CD4-positive, alpha-beta T cell (primary cell): ENCODE measurements at regions of chr5 and their contacts with region 1.

Region 1: DNA sequence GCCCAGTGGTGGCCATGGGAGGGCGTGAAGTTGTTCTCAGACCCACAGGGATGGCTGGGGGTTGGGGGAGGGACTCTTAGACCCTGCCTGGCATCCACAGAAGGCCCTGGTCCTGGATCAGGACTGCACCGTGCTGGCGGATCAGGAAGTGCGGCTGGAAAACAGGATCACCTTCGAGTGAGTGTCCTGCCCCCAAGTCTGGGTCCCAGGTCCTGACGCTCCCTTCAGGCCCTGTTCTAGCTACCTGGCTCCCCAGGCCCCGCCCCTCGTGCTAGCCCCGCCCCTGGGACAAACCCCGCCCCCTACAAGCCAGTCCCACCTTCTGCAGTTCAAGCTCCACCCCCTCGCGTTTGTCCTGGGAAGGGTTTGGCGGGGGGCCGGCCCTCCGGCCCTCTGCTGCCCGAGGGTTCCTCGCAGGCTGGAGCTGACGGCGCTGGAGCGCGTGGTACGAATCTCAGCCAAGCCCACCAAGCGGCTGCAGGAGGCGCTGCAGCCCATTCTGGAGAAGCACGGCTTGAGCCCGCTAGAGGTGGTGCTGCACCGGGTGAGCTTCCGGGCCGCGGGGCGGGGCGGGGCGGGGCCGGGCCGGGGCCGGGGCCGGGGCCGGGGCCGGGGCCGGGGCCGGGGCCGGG is 12.9 kb downstream of the RGS14 start:
- DNase-seq: peak in 12 of 14 experiments; percentile 29 to 90 (median 62)
- ATAC-seq: peak; percentile 74
- H3K4me3 ChIP-seq: peak overlapping the region; percentile 48
- H3K4me3 Mint-ChIP-seq: peak overlapping the region; percentile 42
- H3K27ac ChIP-seq: peak overlapping the region; percentile 23 to 27
- H3K27ac Mint-ChIP-seq: peak overlapping the region; percentile 33
- H3K4me1 ChIP-seq: peaks cover 82% of the 10 kb centered on the region
- H3K4me1 Mint-ChIP-seq: peaks cover 67% of the 10 kb centered on the region
- H3K27me3 ChIP-seq: no peaks in the 10 kb centered on the region
- H3K27me3 Mint-ChIP-seq: no peaks in the 10 kb centered on the region
- CTCF ChIP-seq: no peak

Region 2: DNA sequence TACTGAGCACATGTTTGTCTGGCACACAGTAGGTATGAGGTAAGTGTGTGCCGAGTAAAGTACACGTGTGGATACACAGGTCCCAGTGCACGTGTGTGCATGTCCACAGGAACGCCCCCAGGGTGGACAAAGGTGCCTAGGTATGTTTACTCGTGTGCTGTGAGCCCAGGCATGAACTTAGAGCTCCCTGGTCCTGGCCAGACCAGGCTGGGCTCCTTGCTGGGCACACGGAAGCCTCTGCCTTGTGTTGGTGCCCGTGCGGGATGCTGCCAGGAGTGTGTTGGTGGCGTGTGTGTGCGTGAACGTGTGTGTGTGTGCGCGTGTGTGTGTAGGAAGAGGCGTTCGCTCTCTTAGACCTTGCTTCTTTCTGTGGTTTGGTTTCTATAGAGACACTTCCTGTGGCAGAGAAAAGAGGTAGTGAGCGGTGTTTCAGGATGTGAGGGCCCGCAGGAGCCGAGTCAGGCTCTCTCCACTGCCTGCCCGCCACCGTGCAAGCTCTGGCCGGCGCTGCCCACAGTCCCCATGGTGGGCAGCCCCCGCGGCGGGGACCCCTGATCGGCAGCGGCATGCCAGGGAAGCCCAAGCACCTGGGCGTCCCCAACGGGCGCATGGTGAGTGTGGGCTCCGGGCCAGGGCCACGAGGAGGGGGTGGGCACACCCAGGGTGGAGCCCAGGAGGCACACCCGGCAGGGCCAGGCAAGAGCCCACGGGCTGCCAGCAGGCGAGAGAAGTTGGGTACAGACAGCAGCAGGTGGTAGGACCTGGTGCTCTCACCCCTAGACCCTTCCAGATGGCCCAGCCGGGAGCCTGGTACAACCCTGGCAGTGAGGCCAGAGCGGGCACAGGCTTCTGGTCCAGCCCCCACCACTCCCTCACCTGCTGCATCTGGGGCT is 12.9 kb before region 1 on chr5 and contains the start of gene RGS14:
- CTCF ChIA-PET with region 1: interaction called, 31 read pairs
- POLR2A ChIA-PET with region 1: interaction called, 51 read pairs
- intact Hi-C with region 1: no loop called
- DNase-seq: peak; percentile 55 to 93 (median 70)
- ATAC-seq: peak; percentile 91
- H3K4me3 ChIP-seq: peak within 1 kb of the TSS; percentile 99
- H3K4me3 Mint-ChIP-seq: peak within 1 kb of the TSS; percentile 82
- H3K27ac ChIP-seq: peak within 1 kb of the TSS; percentile 78 to 80
- H3K27ac Mint-ChIP-seq: peak within 1 kb of the TSS; percentile 83
- H3K4me1 ChIP-seq: peaks cover 79% of the 10 kb centered on the region
- H3K4me1 Mint-ChIP-seq: peaks cover 81% of the 10 kb centered on the region
- H3K27me3 ChIP-seq: no peaks in the 10 kb centered on the region
- H3K27me3 Mint-ChIP-seq: no peaks in the 10 kb centered on the region
- CTCF ChIP-seq: no peak
- total RNA-seq, gene RGS14: 34.7 to 35.3 TPM

Region 3: DNA sequence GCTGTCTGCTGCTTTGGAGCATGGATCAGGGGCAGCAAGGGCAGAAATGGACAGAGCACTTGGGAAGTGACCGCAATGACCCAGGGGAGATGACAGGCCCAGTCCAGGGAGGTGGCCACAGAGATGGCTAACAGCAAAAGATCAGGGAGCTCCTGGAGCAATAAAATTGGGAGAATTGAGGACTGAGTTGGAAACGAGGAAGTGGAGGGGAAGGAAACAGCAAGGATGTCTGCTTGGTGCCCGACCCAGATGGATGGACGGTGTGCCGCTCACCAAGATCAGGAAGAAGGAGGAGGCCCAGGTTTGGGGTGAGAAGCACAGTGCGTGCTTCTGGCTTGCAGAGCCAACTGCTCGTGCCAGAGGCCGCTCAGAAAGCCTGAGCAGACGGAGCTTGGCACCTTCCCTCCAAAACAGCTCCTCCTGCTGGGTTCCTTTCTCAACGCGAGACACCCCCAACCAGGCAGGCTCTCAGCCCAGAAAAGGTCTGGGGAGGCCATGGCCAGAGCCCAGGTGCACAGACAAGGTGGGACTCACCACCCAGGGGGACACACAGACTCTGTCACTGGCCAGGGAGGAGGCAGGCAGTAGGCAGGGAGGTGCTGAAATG is 11.9 kb after region 1 on chr5:
- CTCF ChIA-PET with region 1: interaction called, 60 read pairs
- POLR2A ChIA-PET with region 1: interaction called, 15 read pairs
- intact Hi-C with region 1: no loop called
- DNase-seq: peak in 5 of 14 experiments; percentile 41 to 69 (median 67)
- ATAC-seq: peak; percentile 87
- H3K4me3 ChIP-seq: no peak overlapping the region
- H3K4me3 Mint-ChIP-seq: no peak overlapping the region
- H3K27ac ChIP-seq: no peak overlapping the region
- H3K27ac Mint-ChIP-seq: peak overlapping the region; percentile 14
- H3K4me1 ChIP-seq: peaks cover 78% of the 10 kb centered on the region
- H3K4me1 Mint-ChIP-seq: peaks cover 27% of the 10 kb centered on the region
- H3K27me3 ChIP-seq: no peaks in the 10 kb centered on the region
- H3K27me3 Mint-ChIP-seq: no peaks in the 10 kb centered on the region
- CTCF ChIP-seq: no peak

Region 4: GRCh38 chr5:177425801-177426565 is 55.4 kb after region 1 on chr5:
- CTCF ChIA-PET with region 1: interaction called, 3 read pairs
- POLR2A ChIA-PET with region 1: interaction called, 13 read pairs
- intact Hi-C with region 1: no loop called
- DNase-seq: peak; percentile 98 to 100 (median 100)
- ATAC-seq: peak; percentile 79
- H3K4me3 ChIP-seq: peak overlapping the region; percentile 52
- H3K4me3 Mint-ChIP-seq: peak overlapping the region; percentile 97
- H3K27ac ChIP-seq: peak overlapping the region; percentile 77 to 83
- H3K27ac Mint-ChIP-seq: peak overlapping the region; percentile 96
- H3K4me1 ChIP-seq: peaks cover 63% of the 10 kb centered on the region
- H3K4me1 Mint-ChIP-seq: peaks cover 42% of the 10 kb centered on the region
- H3K27me3 ChIP-seq: no peaks in the 10 kb centered on the region
- H3K27me3 Mint-ChIP-seq: no peaks in the 10 kb centered on the region
- CTCF ChIP-seq: no peak

Region 5: DNA sequence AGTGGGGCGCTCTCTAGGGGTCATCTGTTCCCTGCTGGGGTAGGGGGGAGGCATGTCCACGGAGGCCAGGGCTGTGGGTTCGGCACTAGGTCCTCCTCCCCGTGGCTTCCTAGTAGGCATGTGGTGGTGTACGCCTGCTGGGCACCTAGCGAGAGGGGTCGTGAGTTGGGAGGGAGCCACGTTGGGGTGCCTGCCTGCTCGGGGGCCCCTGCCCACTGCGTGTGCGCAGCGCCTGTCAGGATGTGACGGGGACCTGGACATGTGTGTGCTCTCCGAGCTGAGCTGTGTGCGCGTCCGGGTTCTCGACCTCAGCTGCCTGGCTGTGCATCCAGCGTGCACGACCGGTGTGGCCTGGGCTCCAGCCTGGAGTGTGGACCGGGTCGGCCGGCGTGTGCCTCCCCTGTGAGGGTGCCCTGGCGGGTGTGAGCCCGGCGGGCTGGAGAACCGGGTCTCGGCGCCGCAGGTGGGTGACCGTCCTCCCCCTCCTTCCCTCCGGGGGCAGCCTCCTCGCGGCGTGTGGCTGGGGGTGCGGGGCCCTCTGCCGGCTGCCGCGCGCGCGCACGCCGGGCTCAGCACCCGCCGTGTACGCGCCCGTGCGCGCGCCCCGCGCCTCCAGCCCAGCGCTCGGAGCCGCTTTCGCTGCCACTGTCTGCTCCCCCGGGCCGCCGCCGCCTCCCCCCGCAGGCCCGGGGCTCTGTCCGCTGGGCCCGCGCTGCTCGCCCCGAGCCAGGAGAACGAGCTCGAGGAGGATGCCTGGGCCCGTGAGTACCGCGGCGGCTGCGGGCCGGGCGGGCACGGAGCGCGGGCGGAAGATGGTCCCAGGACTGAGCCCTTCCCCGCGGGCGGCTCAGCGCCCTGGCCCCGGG is 75.8 kb after region 1 on chr5 and contains the start of gene PRR7:
- CTCF ChIA-PET with region 1: interaction called, 6 read pairs
- POLR2A ChIA-PET with region 1: interaction called, 11 read pairs
- intact Hi-C with region 1: no loop called
- DNase-seq: peak; percentile 56 to 93 (median 72)
- ATAC-seq: peak; percentile 43
- H3K4me3 ChIP-seq: peak within 1 kb of the TSS; percentile 56
- H3K4me3 Mint-ChIP-seq: peak within 1 kb of the TSS; percentile 80
- H3K27ac ChIP-seq: peak within 1 kb of the TSS; percentile 73 to 89
- H3K27ac Mint-ChIP-seq: peak within 1 kb of the TSS; percentile 88
- H3K4me1 ChIP-seq: peaks cover 73% of the 10 kb centered on the region
- H3K4me1 Mint-ChIP-seq: peaks cover 56% of the 10 kb centered on the region
- H3K27me3 ChIP-seq: no peaks in the 10 kb centered on the region
- H3K27me3 Mint-ChIP-seq: no peaks in the 10 kb centered on the region
- CTCF ChIP-seq: no peak
- total RNA-seq, gene PRR7: 23.3 to 23.5 TPM

Region 6: DNA sequence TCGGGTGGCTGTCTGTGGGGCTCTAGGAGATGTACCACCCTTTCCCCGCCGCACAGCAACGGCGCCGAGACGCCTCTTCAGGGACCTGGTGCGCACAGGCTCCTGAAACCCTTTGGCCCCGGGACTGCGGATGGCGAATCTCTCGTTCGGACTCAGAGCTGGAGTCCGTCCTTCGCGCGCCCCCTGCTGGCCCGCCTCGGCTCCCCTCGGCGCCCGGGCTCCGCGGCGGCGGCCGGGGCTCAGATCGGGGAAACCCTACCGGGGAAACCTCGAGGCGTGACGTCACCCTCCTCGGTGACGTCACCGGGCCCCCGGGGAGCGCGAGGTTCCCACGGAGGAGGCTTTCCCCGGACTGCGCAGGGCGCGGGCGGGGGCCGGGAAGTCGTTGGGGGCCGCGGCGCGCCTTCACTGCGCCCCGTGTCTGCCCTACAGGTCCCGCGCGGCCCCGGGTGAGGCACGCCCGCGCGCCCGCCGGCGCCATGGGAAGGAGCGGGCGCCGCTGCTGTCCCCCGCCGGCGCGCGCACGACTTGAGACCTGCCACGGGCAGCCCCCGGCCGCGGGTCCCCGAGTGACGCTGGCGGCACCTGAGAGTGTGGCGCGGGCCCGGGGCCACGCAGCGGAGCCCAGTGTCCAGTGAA is 83.9 kb after region 1 on chr5:
- CTCF ChIA-PET with region 1: interaction called, 6 read pairs
- POLR2A ChIA-PET with region 1: interaction called, 15 read pairs
- intact Hi-C with region 1: no loop called
- DNase-seq: peak; percentile 87 to 97 (median 94)
- ATAC-seq: peak; percentile 45
- H3K4me3 ChIP-seq: peak overlapping the region; percentile 71
- H3K4me3 Mint-ChIP-seq: peak overlapping the region; percentile 89
- H3K27ac ChIP-seq: peak overlapping the region; percentile 90 to 95
- H3K27ac Mint-ChIP-seq: peak overlapping the region; percentile 93
- H3K4me1 ChIP-seq: peaks cover 52% of the 10 kb centered on the region
- H3K4me1 Mint-ChIP-seq: peaks cover 43% of the 10 kb centered on the region
- H3K27me3 ChIP-seq: no peaks in the 10 kb centered on the region
- H3K27me3 Mint-ChIP-seq: no peaks in the 10 kb centered on the region
- CTCF ChIP-seq: peak; percentile 79

Region 7: DNA sequence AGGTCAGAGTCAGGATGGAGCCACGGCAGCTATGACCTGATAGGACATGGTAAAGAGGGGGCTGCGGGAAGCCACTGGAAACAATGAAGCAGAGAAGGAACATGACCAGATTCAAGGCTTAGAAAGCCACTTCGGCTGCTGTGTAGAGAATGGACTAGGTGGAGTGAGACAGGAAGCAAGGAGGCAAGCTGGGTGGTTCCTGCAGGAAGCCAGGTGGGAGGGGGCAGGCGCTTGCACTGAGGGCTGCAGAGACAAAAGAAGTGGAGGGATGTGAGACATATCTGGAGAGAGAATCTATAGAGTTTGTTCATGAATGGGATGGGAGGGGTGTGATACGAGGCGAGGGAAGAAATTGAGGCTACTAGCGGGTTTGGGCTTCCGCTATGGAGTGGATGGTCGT is 723.7 kb after region 1 on chr5:
- CTCF ChIA-PET with region 1: no interaction called
- POLR2A ChIA-PET with region 1: no interaction called
- intact Hi-C with region 1: no loop called
- DNase-seq: peak in 1 of 14 experiments; percentile 54
- ATAC-seq: peak; percentile 46
- H3K4me3 ChIP-seq: no peak overlapping the region
- H3K4me3 Mint-ChIP-seq: peak overlapping the region; percentile 42
- H3K27ac ChIP-seq: no peak overlapping the region
- H3K27ac Mint-ChIP-seq: peak overlapping the region; percentile 48
- H3K4me1 ChIP-seq: peaks cover 15% of the 10 kb centered on the region
- H3K4me1 Mint-ChIP-seq: peaks cover 24% of the 10 kb centered on the region
- H3K27me3 ChIP-seq: no peaks in the 10 kb centered on the region
- H3K27me3 Mint-ChIP-seq: no peaks in the 10 kb centered on the region
- CTCF ChIP-seq: no peak